ENCODE measurements at regions of chr6 and their contacts with region 1.

Region 1: GRCh38 chr6:122471107-122472021 is at the start of gene SERINC1:
- DNase-seq: peak; percentile 96
- ATAC-seq: peak; percentile 94
- H3K4me3 ChIP-seq: peak within 1 kb of the TSS; percentile 97 to 100 (median 99)
- H3K4me3 Mint-ChIP-seq: peak within 1 kb of the TSS; percentile 99
- H3K27ac ChIP-seq: peak within 1 kb of the TSS; percentile 97 to 99
- H3K27ac Mint-ChIP-seq: peak within 1 kb of the TSS; percentile 100
- H3K4me1 ChIP-seq: peaks cover 15 to 34% of the 10 kb centered on the region in 2 donors
- H3K4me1 Mint-ChIP-seq: peaks cover 40% of the 10 kb centered on the region
- H3K27me3 ChIP-seq: no peaks in the 10 kb centered on the region
- H3K27me3 Mint-ChIP-seq: no peaks in the 10 kb centered on the region
- CTCF ChIP-seq: no peak
- total RNA-seq, gene SERINC1: 92.0 and 92.1 TPM in 2 replicates

Region 2: GRCh38 chr6:122399384-122400158 is 71.8 kb before region 1 on chr6 and contains the start of gene HSF2:
- CTCF ChIA-PET with region 1: interaction called, 3 read pairs
- POLR2A ChIA-PET with region 1: interaction called, 4 read pairs
- intact Hi-C with region 1: loop called (anchors 1 kb)
- DNase-seq: peak; percentile 96
- ATAC-seq: peak; percentile 98
- H3K4me3 ChIP-seq: peak within 1 kb of the TSS; percentile 80 to 98 (median 94)
- H3K4me3 Mint-ChIP-seq: peak within 1 kb of the TSS; percentile 97
- H3K27ac ChIP-seq: peak within 1 kb of the TSS; percentile 67 to 80
- H3K27ac Mint-ChIP-seq: peak within 1 kb of the TSS; percentile 89
- H3K4me1 ChIP-seq: peaks cover 12 to 13% of the 10 kb centered on the region in 2 donors
- H3K4me1 Mint-ChIP-seq: peaks cover 20% of the 10 kb centered on the region
- H3K27me3 ChIP-seq: no peaks in the 10 kb centered on the region
- H3K27me3 Mint-ChIP-seq: no peaks in the 10 kb centered on the region
- CTCF ChIP-seq: peak; percentile 15
- total RNA-seq, gene HSF2: 10.6 and 10.8 TPM in 2 replicates

Region 3: DNA sequence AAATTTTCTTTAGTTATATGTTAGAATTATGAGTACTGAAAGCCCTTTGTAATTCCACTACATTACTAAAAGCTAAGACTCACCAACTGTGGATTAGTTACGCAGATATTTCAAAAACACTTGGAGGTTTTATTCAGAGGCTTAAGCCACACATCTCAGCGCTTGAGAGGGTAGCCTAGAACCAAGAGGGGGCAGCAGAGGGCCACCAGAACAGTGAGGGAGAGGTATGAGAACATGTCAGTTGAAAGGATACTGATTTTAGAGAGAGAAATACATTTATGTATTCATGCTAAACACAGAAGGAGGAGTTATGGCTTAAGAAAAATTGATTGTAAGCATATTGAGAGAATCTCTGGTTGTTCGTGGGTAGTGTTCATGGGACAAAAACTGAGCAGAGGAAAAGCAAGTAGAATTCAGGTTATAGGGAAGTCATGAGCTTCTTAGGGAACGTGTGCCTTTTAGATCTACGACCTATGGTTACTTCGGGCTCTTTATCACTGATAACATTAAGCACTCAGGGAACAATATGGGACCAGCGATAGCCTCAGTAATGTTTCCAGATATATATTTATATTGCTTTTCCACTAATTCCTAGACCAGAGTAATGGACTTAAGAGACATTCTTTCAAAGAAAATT is 20.7 kb after region 1 on chr6:
- CTCF ChIA-PET with region 1: interaction called, 10 read pairs
- POLR2A ChIA-PET with region 1: no interaction called
- intact Hi-C with region 1: loop called (anchors 2 kb)
- DNase-seq: peak; percentile 72
- ATAC-seq: peak; percentile 93
- H3K4me3 ChIP-seq: no peak overlapping the region
- H3K4me3 Mint-ChIP-seq: peak overlapping the region; percentile 2
- H3K27ac ChIP-seq: no peak overlapping the region
- H3K27ac Mint-ChIP-seq: no peak overlapping the region
- H3K4me1 ChIP-seq: peaks cover 5 to 10% of the 10 kb centered on the region in 2 donors
- H3K4me1 Mint-ChIP-seq: peaks cover 12% of the 10 kb centered on the region
- H3K27me3 ChIP-seq: no peaks in the 10 kb centered on the region
- H3K27me3 Mint-ChIP-seq: no peaks in the 10 kb centered on the region
- CTCF ChIP-seq: peak; percentile 97

Region 4: GRCh38 chr6:122730775-122731386 is 259.5 kb after region 1 on chr6:
- CTCF ChIA-PET with region 1: no interaction called
- POLR2A ChIA-PET with region 1: no interaction called
- intact Hi-C with region 1: loop called (anchors 10 kb)
- DNase-seq: peak; percentile 30
- ATAC-seq: no peak
- H3K4me3 ChIP-seq: no peak overlapping the region
- H3K4me3 Mint-ChIP-seq: no peak overlapping the region
- H3K27ac ChIP-seq: no peak overlapping the region
- H3K27ac Mint-ChIP-seq: no peak overlapping the region
- H3K4me1 ChIP-seq: no peaks in the 10 kb centered on the region
- H3K4me1 Mint-ChIP-seq: no peaks in the 10 kb centered on the region
- H3K27me3 ChIP-seq: peaks cover 0 to 4% (median 0%) of the 10 kb centered on the region in 4 experiments
- H3K27me3 Mint-ChIP-seq: peaks cover 5% of the 10 kb centered on the region
- CTCF ChIP-seq: peak; percentile 85